Endothelial cell of umbilical vein (primary cell): ENCODE measurements at regions of chr1 and their contacts with region 1.

Region 1: DNA sequence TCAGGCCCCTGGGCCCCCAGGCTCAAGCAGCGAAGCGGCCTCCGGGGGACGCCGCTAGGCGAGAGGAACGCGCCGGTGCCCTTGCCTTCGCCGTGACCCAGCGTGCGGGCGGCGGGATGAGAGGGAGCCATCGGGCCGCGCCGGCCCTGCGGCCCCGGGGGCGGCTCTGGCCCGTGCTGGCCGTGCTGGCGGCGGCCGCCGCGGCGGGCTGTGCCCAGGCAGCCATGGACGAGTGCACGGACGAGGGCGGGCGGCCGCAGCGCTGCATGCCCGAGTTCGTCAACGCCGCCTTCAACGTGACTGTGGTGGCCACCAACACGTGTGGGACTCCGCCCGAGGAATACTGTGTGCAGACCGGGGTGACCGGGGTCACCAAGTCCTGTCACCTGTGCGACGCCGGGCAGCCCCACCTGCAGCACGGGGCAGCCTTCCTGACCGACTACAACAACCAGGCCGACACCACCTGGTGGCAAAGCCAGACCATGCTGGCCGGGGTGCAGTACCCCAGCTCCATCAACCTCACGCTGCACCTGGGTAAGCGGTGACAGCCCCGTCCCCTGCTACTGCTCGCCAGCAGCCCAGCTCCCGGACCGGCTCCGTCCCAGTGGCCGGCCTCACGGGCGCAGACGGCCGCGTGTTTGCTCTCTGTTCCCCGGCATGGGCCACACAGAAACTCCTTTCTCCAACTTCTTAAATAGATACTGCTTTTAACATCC is 539 bp downstream of the LAMC1 start:
- DNase-seq: peak; percentile 78
- H3K4me3 ChIP-seq: peak overlapping the region; percentile 71 to 96 (median 96)
- H3K27ac ChIP-seq: peak overlapping the region; percentile 68
- H3K4me1 ChIP-seq: peaks cover 44% of the 10 kb centered on the region
- H3K27me3 ChIP-seq: no peaks in the 10 kb centered on the region
- CTCF ChIP-seq: peak; percentile 41 to 76
- POLR2A ChIP-seq: no peak

Region 2: DNA sequence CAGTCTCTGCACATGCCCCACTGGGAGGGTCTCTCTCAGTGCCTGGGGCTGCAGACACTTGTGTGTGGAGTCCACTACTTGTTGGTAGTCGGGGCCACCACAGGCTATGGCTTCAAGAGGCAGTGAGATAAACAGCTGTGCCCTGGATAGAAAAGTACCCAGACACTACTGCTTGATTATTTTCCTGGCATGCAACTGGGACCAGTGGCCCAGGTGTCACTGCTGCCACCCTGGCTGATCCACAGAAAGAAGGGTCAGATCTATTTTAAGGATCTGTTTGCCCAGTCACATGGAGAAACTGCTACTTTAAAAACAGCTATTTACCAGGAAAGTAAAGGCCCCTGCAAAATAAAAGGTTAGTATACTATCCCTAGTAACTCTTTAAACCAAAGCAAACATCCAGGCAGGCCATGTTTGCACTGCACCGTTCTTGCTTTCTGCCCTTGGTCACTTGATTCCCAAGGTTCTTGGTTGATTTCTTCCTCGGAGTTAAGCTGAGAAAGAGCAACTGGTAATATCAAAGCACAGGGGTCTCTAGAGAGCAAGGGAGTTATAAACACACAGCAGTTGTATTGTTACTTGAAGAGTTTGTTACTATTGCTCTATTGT is 732.1 kb before region 1 on chr1:
- CTCF ChIA-PET with region 1: no interaction called
- POLR2A ChIA-PET with region 1: no interaction called
- dilution Hi-C with region 1: no loop called
- intact Hi-C with region 1: no loop called
- DNase-seq: no peak
- H3K4me3 ChIP-seq: no peak overlapping the region
- H3K27ac ChIP-seq: no peak overlapping the region
- H3K4me1 ChIP-seq: no peaks in the 10 kb centered on the region
- H3K27me3 ChIP-seq: no peaks in the 10 kb centered on the region
- CTCF ChIP-seq: no peak
- POLR2A ChIP-seq: no peak

Region 3: GRCh38 chr1:182889997-182890396 is 133.8 kb before region 1 on chr1:
- CTCF ChIA-PET with region 1: no interaction called
- POLR2A ChIA-PET with region 1: no interaction called
- dilution Hi-C with region 1: no loop called
- intact Hi-C with region 1: no loop called
- DNase-seq: no peak
- H3K4me3 ChIP-seq: no peak overlapping the region
- H3K27ac ChIP-seq: no peak overlapping the region
- H3K4me1 ChIP-seq: peaks cover 2% of the 10 kb centered on the region
- H3K27me3 ChIP-seq: no peaks in the 10 kb centered on the region
- CTCF ChIP-seq: no peak
- POLR2A ChIP-seq: peak; percentile 5

Region 4: DNA sequence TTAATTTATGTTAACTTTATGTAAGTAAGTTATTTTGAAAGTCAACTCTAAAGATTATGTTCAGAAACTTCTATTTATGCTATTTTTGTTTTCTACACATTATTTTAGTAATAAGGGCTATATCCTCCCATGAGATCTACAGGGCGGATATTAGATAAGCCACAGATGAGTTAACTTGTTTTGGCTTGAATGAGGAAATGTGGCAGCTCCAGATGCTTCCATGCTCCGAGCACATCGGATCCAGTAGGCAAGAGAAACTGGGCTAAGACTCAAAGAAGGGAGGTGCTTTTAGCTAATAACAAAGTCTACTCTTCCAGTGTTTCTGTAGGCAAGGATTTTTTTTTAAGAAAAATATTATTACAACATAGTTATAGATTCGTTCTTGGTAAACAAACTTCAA is 20.6 kb before region 1 on chr1:
- CTCF ChIA-PET with region 1: no interaction called
- POLR2A ChIA-PET with region 1: no interaction called
- dilution Hi-C with region 1: no loop called
- intact Hi-C with region 1: loop called (anchors 1 kb)
- DNase-seq: peak; percentile 93
- H3K4me3 ChIP-seq: no peak overlapping the region
- H3K27ac ChIP-seq: peak overlapping the region; percentile 24
- H3K4me1 ChIP-seq: peaks cover 12% of the 10 kb centered on the region
- H3K27me3 ChIP-seq: no peaks in the 10 kb centered on the region
- CTCF ChIP-seq: no peak
- POLR2A ChIP-seq: no peak

Region 5: GRCh38 chr1:183058851-183059502 is 35.2 kb after region 1 on chr1:
- CTCF ChIA-PET with region 1: interaction called, 4 read pairs
- POLR2A ChIA-PET with region 1: no interaction called
- dilution Hi-C with region 1: no loop called
- intact Hi-C with region 1: loop called (anchors 1 kb)
- DNase-seq: peak; percentile 50
- H3K4me3 ChIP-seq: no peak overlapping the region
- H3K27ac ChIP-seq: peak overlapping the region; percentile 85
- H3K4me1 ChIP-seq: peaks cover 24% of the 10 kb centered on the region
- H3K27me3 ChIP-seq: no peaks in the 10 kb centered on the region
- CTCF ChIP-seq: no peak
- POLR2A ChIP-seq: no peak

Region 6: DNA sequence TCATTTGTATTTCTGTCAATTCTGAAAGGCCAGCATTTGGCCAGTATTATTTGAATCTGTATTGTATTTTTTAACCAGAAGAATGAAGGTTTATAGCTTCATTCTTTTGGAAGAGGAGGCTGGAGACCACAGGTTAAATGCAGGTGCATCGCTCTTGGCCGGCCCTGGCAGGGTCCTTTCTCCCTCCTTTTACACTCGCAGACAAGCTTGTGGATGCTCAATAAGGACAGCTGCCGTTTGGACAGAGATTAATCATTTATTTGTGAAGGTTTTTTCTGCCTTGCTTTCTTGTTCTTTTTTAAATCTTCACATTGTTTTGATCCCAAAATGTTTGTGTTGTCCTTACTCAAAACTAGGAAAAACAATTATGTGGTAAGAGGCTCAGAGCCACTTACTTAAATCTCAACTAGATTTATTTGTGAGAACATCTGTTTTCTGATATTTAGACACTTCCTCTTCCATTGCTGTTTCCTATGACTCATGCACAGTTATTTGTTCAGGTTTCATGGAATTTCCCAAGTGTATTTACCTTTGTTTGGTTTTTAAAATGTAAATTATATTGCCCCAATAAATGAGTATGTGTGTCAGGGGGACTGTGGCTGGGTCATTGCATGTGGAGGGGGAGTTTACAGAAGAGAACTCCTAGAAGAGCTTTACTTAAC is 115.7 kb after region 1 on chr1:
- CTCF ChIA-PET with region 1: no interaction called
- POLR2A ChIA-PET with region 1: no interaction called
- dilution Hi-C with region 1: no loop called
- intact Hi-C with region 1: loop called (anchors 1 kb)
- DNase-seq: peak; percentile 96
- H3K4me3 ChIP-seq: peak overlapping the region in 1 of 3 experiments; percentile 19
- H3K27ac ChIP-seq: peak overlapping the region; percentile 94
- H3K4me1 ChIP-seq: peaks cover 25% of the 10 kb centered on the region
- H3K27me3 ChIP-seq: no peaks in the 10 kb centered on the region
- CTCF ChIP-seq: no peak
- POLR2A ChIP-seq: peak; percentile 82

Region 7: GRCh38 chr1:183152180-183152579 is 128.4 kb after region 1 on chr1:
- CTCF ChIA-PET with region 1: no interaction called
- POLR2A ChIA-PET with region 1: no interaction called
- dilution Hi-C with region 1: no loop called
- intact Hi-C with region 1: no loop called
- DNase-seq: no peak
- H3K4me3 ChIP-seq: no peak overlapping the region
- H3K27ac ChIP-seq: no peak overlapping the region
- H3K4me1 ChIP-seq: no peaks in the 10 kb centered on the region
- H3K27me3 ChIP-seq: no peaks in the 10 kb centered on the region
- CTCF ChIP-seq: no peak
- POLR2A ChIP-seq: no peak

Region 8: GRCh38 chr1:183185941-183186490 is 162.3 kb after region 1 on chr1 and contains the start of gene LAMC2:
- CTCF ChIA-PET with region 1: no interaction called
- POLR2A ChIA-PET with region 1: no interaction called
- dilution Hi-C with region 1: no loop called
- intact Hi-C with region 1: loop called (anchors 1 kb)
- DNase-seq: peak; percentile 46
- H3K4me3 ChIP-seq: peak within 1 kb of the TSS in 2 of 3 experiments; percentile 13 to 41
- H3K27ac ChIP-seq: peak within 1 kb of the TSS; percentile 22
- H3K4me1 ChIP-seq: peaks cover 12% of the 10 kb centered on the region
- H3K27me3 ChIP-seq: no peaks in the 10 kb centered on the region
- CTCF ChIP-seq: peak; percentile 33 to 47
- POLR2A ChIP-seq: no peak
- total RNA-seq, gene LAMC2: 0.82 and 4.0 TPM in 2 replicates

Region 9: GRCh38 chr1:183270541-183271141 is 246.9 kb after region 1 on chr1:
- CTCF ChIA-PET with region 1: interaction called, 3 read pairs
- POLR2A ChIA-PET with region 1: no interaction called
- dilution Hi-C with region 1: no loop called
- intact Hi-C with region 1: loop called (anchors 5 kb)
- DNase-seq: peak; percentile 92
- H3K4me3 ChIP-seq: no peak overlapping the region
- H3K27ac ChIP-seq: peak overlapping the region; percentile 56
- H3K4me1 ChIP-seq: peaks cover 28% of the 10 kb centered on the region
- H3K27me3 ChIP-seq: no peaks in the 10 kb centered on the region
- CTCF ChIP-seq: no peak
- POLR2A ChIP-seq: no peak